Naive thymus-derived CD4-positive, alpha-beta T cell (primary cell): ENCODE measurements at regions of chr17 and their contacts with region 1.

Region 1: GRCh38 chr17:28612936-28613872 is 781 bp downstream of the RSKR start:
- DNase-seq: peak in 7 of 9 donors; percentile 27 to 45 (median 41)
- ATAC-seq: peak; percentile 70
- H3K4me3 ChIP-seq: no peak overlapping the region
- H3K4me3 Mint-ChIP-seq: no peak overlapping the region
- H3K27ac ChIP-seq: no peak overlapping the region
- H3K27ac Mint-ChIP-seq: peak overlapping the region in 6 of 9 donors; percentile 38 to 75 (median 64)
- H3K4me1 ChIP-seq: no peaks in the 10 kb centered on the region
- H3K4me1 Mint-ChIP-seq: peaks cover 6 to 19% (median 10%) of the 10 kb centered on the region in 7 donors
- H3K27me3 ChIP-seq: no peaks in the 10 kb centered on the region
- H3K27me3 Mint-ChIP-seq: no peaks in the 10 kb centered on the region

Region 2: GRCh38 chr17:28252436-28252835 is 360.8 kb before region 1 on chr17:
- CTCF ChIA-PET with region 1: no interaction called
- POLR2A ChIA-PET with region 1: no interaction called
- intact Hi-C with region 1: no loop called
- DNase-seq: no peak
- ATAC-seq: no peak
- H3K4me3 ChIP-seq: no peak overlapping the region
- H3K4me3 Mint-ChIP-seq: peak overlapping the region in 2 of 10 donors; percentile 84 to 86
- H3K27ac ChIP-seq: no peak overlapping the region
- H3K27ac Mint-ChIP-seq: peak overlapping the region in 1 of 9 donors; percentile 4
- H3K4me1 ChIP-seq: peaks cover 0 to 4% of the 10 kb centered on the region in 2 donors
- H3K4me1 Mint-ChIP-seq: peaks cover 6 to 10% (median 8%) of the 10 kb centered on the region in 7 donors
- H3K27me3 ChIP-seq: no peaks in the 10 kb centered on the region
- H3K27me3 Mint-ChIP-seq: peaks cover 4 to 23% (median 9%) of the 10 kb centered on the region in 5 donors

Region 3: DNA sequence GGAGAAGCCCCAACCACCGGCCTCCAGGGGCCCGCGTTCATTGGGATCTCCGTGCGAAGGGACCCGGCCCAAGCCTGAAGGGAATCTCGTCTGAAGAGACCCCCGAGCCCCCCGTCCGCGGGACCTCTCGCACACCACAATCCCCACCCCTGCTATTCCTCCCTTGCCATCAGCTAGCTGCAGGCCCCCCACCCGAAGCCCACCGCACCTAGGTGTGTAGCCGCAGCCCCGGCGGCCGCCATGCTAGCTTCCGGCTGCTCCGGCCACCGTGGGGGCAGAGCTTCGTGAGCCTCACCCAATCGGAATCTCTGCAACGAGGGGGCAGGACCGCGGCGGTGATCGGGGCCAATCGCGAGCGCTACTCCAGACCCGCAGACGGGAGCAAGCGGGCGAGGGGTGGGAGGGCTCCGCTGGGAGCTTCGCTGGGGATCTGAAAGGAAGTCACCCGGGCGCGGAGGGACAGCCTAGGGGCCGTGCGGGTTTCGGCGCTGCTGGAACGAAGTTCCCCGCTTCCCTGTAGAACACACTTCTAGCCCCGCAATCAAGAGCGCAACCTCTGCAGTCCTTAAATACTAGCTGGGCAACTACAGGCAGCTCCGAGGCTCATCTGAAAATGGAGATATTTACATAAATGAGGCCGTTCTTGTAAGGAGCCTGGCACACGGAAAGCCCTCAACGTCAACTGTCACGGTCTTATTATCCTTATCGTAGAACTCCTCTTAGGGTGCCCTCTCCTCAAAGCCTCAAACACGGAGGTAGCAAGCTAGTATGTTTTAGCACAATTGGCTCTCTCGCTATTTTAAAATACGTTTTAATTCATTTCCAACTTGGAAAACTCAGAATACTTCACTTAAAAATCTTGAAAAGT is 41.7 kb before region 1 on chr17 and contains the start of gene PIGS:
- CTCF ChIA-PET with region 1: interaction called, 7 read pairs
- POLR2A ChIA-PET with region 1: interaction called, 5 read pairs
- intact Hi-C with region 1: loop called (anchors 1 to 5 kb)
- DNase-seq: peak; percentile 72 to 93 (median 84)
- ATAC-seq: peak; percentile 99
- H3K4me3 ChIP-seq: peak within 1 kb of the TSS; percentile 78
- H3K4me3 Mint-ChIP-seq: peak within 1 kb of the TSS; percentile 93 to 99 (median 96)
- H3K27ac ChIP-seq: peak within 1 kb of the TSS; percentile 90
- H3K27ac Mint-ChIP-seq: peak within 1 kb of the TSS; percentile 84 to 97 (median 93)
- H3K4me1 ChIP-seq: peaks cover 28 to 31% of the 10 kb centered on the region in 2 donors
- H3K4me1 Mint-ChIP-seq: peaks cover 49 to 76% (median 68%) of the 10 kb centered on the region in 7 donors
- H3K27me3 ChIP-seq: no peaks in the 10 kb centered on the region
- H3K27me3 Mint-ChIP-seq: no peaks in the 10 kb centered on the region
- total RNA-seq, gene PIGS: 58.5 to 71.2 (median 62.4) TPM

Region 4: GRCh38 chr17:28576758-28577465 is 36.3 kb before region 1 on chr17 and contains the start of gene ALDOC:
- CTCF ChIA-PET with region 1: interaction called, 3 read pairs
- POLR2A ChIA-PET with region 1: interaction called, 7 read pairs
- intact Hi-C with region 1: loop called in 1 of 2 experiments (anchors 5 kb)
- DNase-seq: peak; percentile 95 to 99 (median 98)
- ATAC-seq: peak; percentile 100
- H3K4me3 ChIP-seq: peak within 1 kb of the TSS; percentile 50
- H3K4me3 Mint-ChIP-seq: peak within 1 kb of the TSS; percentile 83 to 96 (median 86)
- H3K27ac ChIP-seq: peak within 1 kb of the TSS; percentile 52
- H3K27ac Mint-ChIP-seq: peak within 1 kb of the TSS; percentile 79 to 95 (median 89)
- H3K4me1 ChIP-seq: peaks cover 19 to 23% of the 10 kb centered on the region in 2 donors
- H3K4me1 Mint-ChIP-seq: peaks cover 20 to 70% (median 38%) of the 10 kb centered on the region in 7 donors
- H3K27me3 ChIP-seq: no peaks in the 10 kb centered on the region
- H3K27me3 Mint-ChIP-seq: no peaks in the 10 kb centered on the region
- total RNA-seq, gene ALDOC: 24.5 to 159 (median 40.1) TPM

Region 5: GRCh38 chr17:29042679-29043538 is 429.7 kb after region 1 on chr17 and contains the start of gene PIPOX:
- CTCF ChIA-PET with region 1: no interaction called
- POLR2A ChIA-PET with region 1: no interaction called
- intact Hi-C with region 1: no loop called
- DNase-seq: no peak
- ATAC-seq: peak; percentile 84
- H3K4me3 ChIP-seq: no peak within 1 kb of the TSS
- H3K4me3 Mint-ChIP-seq: no peak within 1 kb of the TSS
- H3K27ac ChIP-seq: no peak within 1 kb of the TSS
- H3K27ac Mint-ChIP-seq: no peak within 1 kb of the TSS
- H3K4me1 ChIP-seq: no peaks in the 10 kb centered on the region
- H3K4me1 Mint-ChIP-seq: peaks cover 0 to 14% (median 0%) of the 10 kb centered on the region in 7 donors
- H3K27me3 ChIP-seq: no peaks in the 10 kb centered on the region
- H3K27me3 Mint-ChIP-seq: peaks cover 0 to 23% (median 12%) of the 10 kb centered on the region in 5 donors
- total RNA-seq, gene PIPOX: 1.6 to 6.4 (median 5.3) TPM